ENCODE measurements at regions of chr2 and their contacts with region 1.

Region 1: DNA sequence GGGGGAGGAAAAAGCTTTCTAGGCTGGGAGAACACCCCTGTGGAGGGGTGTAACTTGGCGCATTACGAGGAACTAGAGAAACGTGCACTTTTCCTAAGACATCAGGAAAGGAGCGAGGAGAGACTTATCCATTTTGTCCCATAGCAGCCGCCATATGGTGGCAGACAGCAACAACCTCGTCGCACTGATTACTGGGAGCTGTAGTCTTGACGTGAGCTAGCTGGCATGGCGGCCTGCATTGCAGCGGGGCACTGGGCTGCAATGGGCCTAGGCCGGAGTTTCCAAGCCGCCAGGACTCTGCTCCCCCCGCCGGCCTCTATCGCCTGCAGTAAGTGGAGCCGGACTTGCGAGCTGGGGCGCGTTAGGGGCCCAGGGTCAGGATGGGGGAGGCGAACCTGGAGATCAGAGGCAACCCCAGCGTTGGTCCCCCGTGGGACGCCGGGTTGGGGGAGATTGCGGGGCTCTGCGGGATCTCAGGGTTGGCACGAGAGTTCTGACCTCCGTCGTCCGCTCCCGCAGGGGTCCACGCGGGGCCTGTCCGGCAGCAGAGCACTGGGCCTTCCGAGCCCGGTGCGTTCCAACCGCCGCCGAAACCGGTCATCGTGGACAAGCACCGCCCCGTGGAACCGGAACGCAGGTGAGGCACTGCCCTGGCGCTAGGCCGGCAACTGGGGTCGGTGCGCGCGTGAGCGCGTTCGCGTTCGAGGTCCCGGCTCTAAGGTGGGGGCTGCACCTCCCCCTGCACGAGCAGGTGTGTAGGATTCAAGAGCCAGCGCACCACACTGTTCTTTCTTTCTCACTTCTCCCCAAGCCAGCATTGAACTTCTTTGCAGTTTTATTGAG is at the start of gene MRPL19:
- DNase-seq: peak; percentile 82
- H3K4me3 Mint-ChIP-seq: peak within 1 kb of the TSS; percentile 91
- H3K27ac Mint-ChIP-seq: peak within 1 kb of the TSS; percentile 72
- H3K4me1 Mint-ChIP-seq: peaks cover 8% of the 10 kb centered on the region
- H3K27me3 Mint-ChIP-seq: no peaks in the 10 kb centered on the region
- CTCF ChIP-seq: no peak
- total RNA-seq, gene MRPL19: 51.0 and 53.3 TPM in 2 replicates

Region 2: GRCh38 chr2:75676464-75676863 is 29.7 kb after region 1 on chr2:
- CTCF ChIA-PET with region 1: interaction called, 22 read pairs
- intact Hi-C with region 1: no loop called
- DNase-seq: no peak
- H3K4me3 Mint-ChIP-seq: no peak overlapping the region
- H3K27ac Mint-ChIP-seq: no peak overlapping the region
- H3K4me1 Mint-ChIP-seq: peaks cover 10% of the 10 kb centered on the region
- H3K27me3 Mint-ChIP-seq: no peaks in the 10 kb centered on the region
- CTCF ChIP-seq: no peak

Region 3: GRCh38 chr2:75705921-75706320 is 59.1 kb after region 1 on chr2:
- CTCF ChIA-PET with region 1: no interaction called
- intact Hi-C with region 1: loop called (anchors 2 kb)
- DNase-seq: no peak
- H3K4me3 Mint-ChIP-seq: no peak overlapping the region
- H3K27ac Mint-ChIP-seq: no peak overlapping the region
- H3K4me1 Mint-ChIP-seq: peaks cover 18% of the 10 kb centered on the region
- H3K27me3 Mint-ChIP-seq: no peaks in the 10 kb centered on the region
- CTCF ChIP-seq: no peak

Region 4: DNA sequence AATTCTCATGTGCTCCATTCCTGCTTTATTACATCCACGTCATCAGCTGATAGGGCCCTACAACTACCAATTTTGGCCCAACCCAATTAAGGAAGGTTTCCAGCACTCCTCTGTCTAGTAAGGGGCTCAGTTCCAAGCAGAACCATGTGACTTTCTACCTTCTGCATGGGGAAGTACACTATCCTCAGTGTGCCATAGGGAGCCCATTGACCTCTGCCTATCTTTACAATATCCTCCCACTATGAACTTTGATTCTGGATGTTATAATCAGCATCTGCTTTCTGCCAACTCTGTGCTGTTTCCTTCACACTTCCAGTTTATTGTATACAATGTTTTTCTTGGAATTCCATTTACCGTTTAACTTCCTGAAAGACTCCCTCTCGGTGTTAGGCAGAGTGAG is 117.8 kb after region 1 on chr2:
- CTCF ChIA-PET with region 1: no interaction called
- intact Hi-C with region 1: no loop called
- DNase-seq: no peak
- H3K4me3 Mint-ChIP-seq: no peak overlapping the region
- H3K27ac Mint-ChIP-seq: no peak overlapping the region
- H3K4me1 Mint-ChIP-seq: no peaks in the 10 kb centered on the region
- H3K27me3 Mint-ChIP-seq: peaks cover 18% of the 10 kb centered on the region
- CTCF ChIP-seq: no peak

Region 5: GRCh38 chr2:75833386-75833785 is 186.6 kb after region 1 on chr2:
- CTCF ChIA-PET with region 1: no interaction called
- intact Hi-C with region 1: no loop called
- DNase-seq: no peak
- H3K4me3 Mint-ChIP-seq: no peak overlapping the region
- H3K27ac Mint-ChIP-seq: no peak overlapping the region
- H3K4me1 Mint-ChIP-seq: no peaks in the 10 kb centered on the region
- H3K27me3 Mint-ChIP-seq: no peaks in the 10 kb centered on the region
- CTCF ChIP-seq: no peak

Region 6: DNA sequence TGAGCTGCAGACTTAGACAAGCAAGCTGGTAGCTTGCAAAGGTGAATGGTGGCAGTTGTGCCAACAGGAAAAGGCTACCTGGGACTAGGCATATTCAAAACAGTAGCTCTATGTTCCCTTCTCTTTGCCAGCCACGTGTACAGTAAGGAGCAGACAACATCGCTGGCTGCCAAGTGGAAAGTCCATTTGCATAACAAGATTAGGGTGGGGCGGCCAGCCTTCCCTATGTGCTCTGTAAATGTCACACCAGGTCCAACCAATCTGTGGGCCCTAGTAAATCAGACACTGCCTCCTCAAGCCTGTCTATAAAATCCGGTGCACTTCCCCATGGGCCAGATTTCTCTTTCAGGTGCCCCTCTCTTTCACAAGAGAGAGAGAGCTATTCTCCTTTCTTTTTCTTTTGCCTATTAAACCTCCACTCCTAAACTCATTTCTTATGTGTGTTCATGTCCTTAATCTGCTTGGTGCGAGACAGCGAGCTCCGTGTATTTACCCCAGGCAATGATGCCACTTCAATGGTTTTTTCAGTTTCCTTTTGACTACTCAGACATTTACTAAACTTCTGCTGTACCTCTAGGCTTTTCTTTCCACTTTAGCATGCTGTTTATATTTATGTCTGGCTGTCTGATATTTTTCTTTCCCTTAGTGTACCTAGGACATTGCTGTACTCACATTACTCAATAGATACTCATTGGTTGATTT is 361.3 kb after region 1 on chr2:
- CTCF ChIA-PET with region 1: no interaction called
- intact Hi-C with region 1: no loop called
- DNase-seq: no peak
- H3K4me3 Mint-ChIP-seq: no peak overlapping the region
- H3K27ac Mint-ChIP-seq: no peak overlapping the region
- H3K4me1 Mint-ChIP-seq: no peaks in the 10 kb centered on the region
- H3K27me3 Mint-ChIP-seq: no peaks in the 10 kb centered on the region
- CTCF ChIP-seq: no peak